Activated CD4-positive, alpha-beta memory T cell treated with anti-CD3 and anti-CD28 coated beads, Interleukin-2, amount 10 ng/mL, durations not matched to agents 7 days and 5 days (primary cell): ENCODE measurements at regions of chr17 and their contacts with region 1.

Region 1: GRCh38 chr17:44218344-44219107 is 949 bp downstream of the UBTF start:
- DNase-seq: peak; percentile 89
- H3K4me3 Mint-ChIP-seq: peak overlapping the region; percentile 90
- H3K27ac Mint-ChIP-seq: peak overlapping the region; percentile 81
- H3K4me1 Mint-ChIP-seq: peaks cover 47% of the 10 kb centered on the region
- H3K27me3 Mint-ChIP-seq: no peaks in the 10 kb centered on the region

Region 2: GRCh38 chr17:44199553-44200477 is 18.7 kb before region 1 on chr17 and contains the start of gene ATXN7L3:
- CTCF ChIA-PET with region 1: interaction called, 31 read pairs
- POLR2A ChIA-PET with region 1: interaction called, 504 read pairs
- DNase-seq: peak; percentile 100
- H3K4me3 Mint-ChIP-seq: peak within 1 kb of the TSS; percentile 90
- H3K27ac Mint-ChIP-seq: peak within 1 kb of the TSS; percentile 95
- H3K4me1 Mint-ChIP-seq: peaks cover 59% of the 10 kb centered on the region
- H3K27me3 Mint-ChIP-seq: no peaks in the 10 kb centered on the region
- total RNA-seq, gene ATXN7L3: 106 to 107 TPM

Region 3: DNA sequence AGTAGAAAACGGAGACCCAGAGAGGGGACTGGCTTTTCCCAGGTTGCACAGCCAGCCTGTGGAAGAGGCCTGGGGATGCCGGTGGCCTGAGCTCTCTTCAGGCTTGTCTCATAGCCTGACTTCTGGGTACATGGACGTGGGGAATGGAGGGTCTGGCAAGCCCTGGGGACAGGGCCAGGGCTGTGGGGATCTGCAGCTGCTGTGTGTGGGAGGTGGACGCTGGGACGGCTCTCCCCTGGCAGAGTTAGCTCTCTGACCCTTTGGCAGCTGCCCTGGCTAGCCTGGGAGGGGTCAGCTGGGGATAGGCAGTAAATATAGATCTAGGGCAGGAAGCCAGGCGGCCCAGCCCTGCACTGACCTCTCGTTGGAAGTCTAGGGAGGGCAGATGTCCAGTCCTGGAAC is 28.9 kb after region 1 on chr17:
- CTCF ChIA-PET with region 1: interaction called, 3 read pairs
- POLR2A ChIA-PET with region 1: interaction called, 26 read pairs
- DNase-seq: no peak
- H3K4me3 Mint-ChIP-seq: no peak overlapping the region
- H3K27ac Mint-ChIP-seq: no peak overlapping the region
- H3K4me1 Mint-ChIP-seq: peaks cover 37% of the 10 kb centered on the region
- H3K27me3 Mint-ChIP-seq: no peaks in the 10 kb centered on the region

Region 4: GRCh38 chr17:44314869-44315661 is 96.5 kb after region 1 on chr17:
- CTCF ChIA-PET with region 1: no interaction called
- POLR2A ChIA-PET with region 1: interaction called, 117 read pairs
- DNase-seq: peak; percentile 47
- H3K4me3 Mint-ChIP-seq: peak overlapping the region; percentile 61
- H3K27ac Mint-ChIP-seq: no peak overlapping the region
- H3K4me1 Mint-ChIP-seq: peaks cover 13% of the 10 kb centered on the region
- H3K27me3 Mint-ChIP-seq: peaks cover 43% of the 10 kb centered on the region

Region 5: GRCh38 chr17:44324571-44325275 is 106.2 kb after region 1 on chr17 and contains the start of gene SLC25A39:
- CTCF ChIA-PET with region 1: interaction called, 8 read pairs
- POLR2A ChIA-PET with region 1: interaction called, 117 read pairs
- DNase-seq: peak; percentile 95
- H3K4me3 Mint-ChIP-seq: peak within 1 kb of the TSS; percentile 87
- H3K27ac Mint-ChIP-seq: peak within 1 kb of the TSS; percentile 97
- H3K4me1 Mint-ChIP-seq: peaks cover 28% of the 10 kb centered on the region
- H3K27me3 Mint-ChIP-seq: no peaks in the 10 kb centered on the region
- total RNA-seq, gene SLC25A39: 72.6 to 77.0 TPM

Region 6: DNA sequence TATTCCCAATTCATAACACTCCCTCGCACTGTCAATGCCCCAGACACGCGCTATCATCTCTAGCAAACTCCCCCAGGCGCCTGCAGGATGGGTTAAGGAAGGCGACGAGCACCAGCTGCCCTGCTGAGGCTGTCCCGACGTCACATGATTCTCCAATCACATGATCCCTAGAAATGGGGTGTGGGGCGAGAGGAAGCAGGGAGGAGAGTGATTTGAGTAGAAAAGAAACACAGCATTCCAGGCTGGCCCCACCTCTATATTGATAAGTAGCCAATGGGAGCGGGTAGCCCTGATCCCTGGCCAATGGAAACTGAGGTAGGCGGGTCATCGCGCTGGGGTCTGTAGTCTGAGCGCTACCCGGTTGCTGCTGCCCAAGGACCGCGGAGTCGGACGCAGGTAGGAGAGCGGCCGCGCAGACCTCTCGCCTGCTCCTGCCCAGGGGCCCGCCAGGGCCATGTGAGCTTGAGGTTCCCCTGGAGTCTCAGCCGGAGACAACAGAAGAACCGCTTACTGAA is 126.5 kb after region 1 on chr17 and contains the start of gene GRN:
- CTCF ChIA-PET with region 1: interaction called, 14 read pairs
- POLR2A ChIA-PET with region 1: interaction called, 8 read pairs
- DNase-seq: peak; percentile 89
- H3K4me3 Mint-ChIP-seq: peak within 1 kb of the TSS; percentile 84
- H3K27ac Mint-ChIP-seq: peak within 1 kb of the TSS; percentile 44
- H3K4me1 Mint-ChIP-seq: peaks cover 30% of the 10 kb centered on the region
- H3K27me3 Mint-ChIP-seq: peaks cover 12% of the 10 kb centered on the region
- total RNA-seq, gene GRN: 87.8 to 98.4 TPM